ENCODE measurements at regions of chr4 and their contacts with region 1.

Region 1: GRCh38 chr4:143558823-143559756 is 45.6 kb downstream of the SMARCA5 start:
- DNase-seq: peak; percentile 82
- H3K4me3 Mint-ChIP-seq: peak overlapping the region; percentile 93
- H3K27ac Mint-ChIP-seq: peak overlapping the region; percentile 87
- H3K4me1 Mint-ChIP-seq: peaks cover 28% of the 10 kb centered on the region
- H3K27me3 Mint-ChIP-seq: no peaks in the 10 kb centered on the region

Region 2: GRCh38 chr4:143700416-143701352 is 141.6 kb after region 1 on chr4 and contains the start of gene FREM3:
- CTCF ChIA-PET with region 1: no interaction called
- intact Hi-C with region 1: loop called (anchors 5 kb)
- DNase-seq: no peak
- H3K4me3 Mint-ChIP-seq: peak within 1 kb of the TSS; percentile 35
- H3K27ac Mint-ChIP-seq: no peak within 1 kb of the TSS
- H3K4me1 Mint-ChIP-seq: peaks cover 15% of the 10 kb centered on the region
- H3K27me3 Mint-ChIP-seq: peaks cover 46% of the 10 kb centered on the region
- total RNA-seq, gene FREM3: not detected

Region 3: DNA sequence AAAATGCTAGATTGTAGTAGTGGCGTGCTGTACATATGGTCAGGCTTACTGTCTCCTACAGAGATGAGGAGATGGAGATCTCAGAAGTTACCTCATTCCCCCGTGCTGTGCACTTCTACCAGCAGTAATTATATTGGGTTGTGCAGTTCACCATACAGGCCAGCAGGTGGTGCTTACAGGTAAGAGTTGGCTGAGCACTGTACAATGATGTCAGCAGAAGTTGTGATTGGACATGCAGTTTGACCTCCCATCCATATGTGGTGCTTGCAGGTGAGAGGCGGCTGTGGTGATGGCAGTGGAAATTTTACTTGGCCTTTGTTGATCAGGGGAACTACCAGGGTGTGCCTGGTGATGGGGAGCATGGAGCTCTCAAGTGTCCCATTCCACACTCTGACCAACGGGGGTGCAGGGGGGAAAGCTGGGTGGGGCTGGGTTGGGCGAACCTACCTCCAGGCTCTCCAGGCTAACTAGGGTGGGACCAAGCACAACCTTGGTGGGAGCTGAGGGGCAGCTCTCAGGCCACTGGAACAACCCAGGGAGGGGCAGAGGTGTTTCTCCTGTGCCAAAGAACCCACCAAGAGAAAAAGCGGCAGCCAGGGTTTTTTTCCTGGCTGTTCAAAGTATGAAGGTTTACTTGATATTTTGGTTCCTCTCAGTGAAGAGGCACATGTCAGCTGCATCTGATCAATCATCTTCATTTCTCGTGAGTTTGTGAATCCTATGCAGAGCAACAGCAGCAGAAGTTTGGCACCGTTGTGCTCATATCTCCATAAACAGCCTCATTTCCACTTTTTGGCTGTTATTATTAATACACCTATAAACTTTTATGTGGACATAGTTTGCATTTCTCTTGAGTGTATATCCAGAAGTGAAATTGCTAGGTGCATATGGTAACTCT is 215.2 kb after region 1 on chr4:
- CTCF ChIA-PET with region 1: no interaction called
- intact Hi-C with region 1: loop called (anchors 1 kb)
- DNase-seq: peak; percentile 63
- H3K4me3 Mint-ChIP-seq: no peak overlapping the region
- H3K27ac Mint-ChIP-seq: no peak overlapping the region
- H3K4me1 Mint-ChIP-seq: no peaks in the 10 kb centered on the region
- H3K27me3 Mint-ChIP-seq: peaks cover 2% of the 10 kb centered on the region

Region 4: GRCh38 chr4:144141493-144141892 is 582.4 kb after region 1 on chr4:
- CTCF ChIA-PET with region 1: no interaction called
- intact Hi-C with region 1: loop called (anchors 1 kb)
- DNase-seq: no peak
- H3K4me3 Mint-ChIP-seq: no peak overlapping the region
- H3K27ac Mint-ChIP-seq: no peak overlapping the region
- H3K4me1 Mint-ChIP-seq: no peaks in the 10 kb centered on the region
- H3K27me3 Mint-ChIP-seq: peaks cover 9% of the 10 kb centered on the region